ENCODE measurements at regions of chr17 and their contacts with region 1.

Region 1: DNA sequence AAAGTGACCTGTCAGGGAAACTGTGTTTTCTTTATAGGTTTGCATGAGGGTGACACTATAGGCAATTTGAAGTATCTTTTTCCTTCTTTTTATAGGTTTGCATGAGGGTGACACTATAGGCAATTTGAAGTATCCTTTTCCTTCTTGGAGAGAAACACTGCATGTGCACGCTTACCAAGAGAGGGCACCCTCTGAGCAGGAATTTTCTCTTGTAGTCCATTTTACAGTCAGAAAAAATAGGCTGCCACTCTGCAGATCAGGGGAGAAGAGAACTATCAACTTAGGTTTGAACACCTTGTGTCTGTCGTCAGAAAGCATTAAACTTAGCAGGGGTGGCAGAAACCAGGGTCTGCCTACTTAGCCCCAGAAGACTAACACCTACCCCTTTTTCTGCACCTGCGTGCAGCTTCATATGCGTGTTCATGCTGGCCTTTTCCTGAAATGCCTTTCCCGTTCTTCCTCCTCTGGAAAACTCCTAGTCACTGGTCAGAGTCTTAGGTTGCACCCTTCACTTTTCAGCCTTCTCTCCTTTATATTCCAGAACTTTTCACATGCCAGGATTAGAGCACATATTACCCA is 16.4 kb upstream of the SMIM36 start:
- DNase-seq: peak in 3 of 10 donors; percentile 6 to 30 (median 24)
- H3K4me3 ChIP-seq: no peak overlapping the region
- H3K27ac ChIP-seq: no peak overlapping the region
- H3K27me3 ChIP-seq: peaks cover 0 to 4% (median 0%) of the 10 kb centered on the region in 45 donors
- CTCF ChIP-seq: peak in 54 of 56 donors; percentile 18 to 79 (median 57)

Region 2: GRCh38 chr17:55549140-55549539 is 21.5 kb after region 1 on chr17:
- intact Hi-C with region 1: no loop called
- DNase-seq: no peak
- H3K4me3 ChIP-seq: no peak overlapping the region
- H3K27ac ChIP-seq: no peak overlapping the region
- H3K27me3 ChIP-seq: peaks cover 0 to 20% (median 0%) of the 10 kb centered on the region in 45 donors
- CTCF ChIP-seq: peak in 7 of 56 donors; percentile 11 to 32 (median 19)

Region 3: GRCh38 chr17:55770148-55770870 is 242.7 kb after region 1 on chr17:
- intact Hi-C with region 1: loop called (anchors 1 to 2 kb)
- DNase-seq: no peak
- H3K4me3 ChIP-seq: no peak overlapping the region
- H3K27ac ChIP-seq: peak overlapping the region in 4 of 59 donors; percentile 1 to 29 (median 10)
- H3K27me3 ChIP-seq: no peaks in the 10 kb centered on the region
- CTCF ChIP-seq: peak; percentile 55 to 89 (median 74)

Region 4: GRCh38 chr17:55825213-55825612 is 297.6 kb after region 1 on chr17:
- intact Hi-C with region 1: loop called in 1 of 2 experiments (anchors 10 kb)
- DNase-seq: no peak
- H3K4me3 ChIP-seq: no peak overlapping the region
- H3K27ac ChIP-seq: no peak overlapping the region
- H3K27me3 ChIP-seq: peaks cover 0 to 5% (median 0%) of the 10 kb centered on the region in 45 donors
- CTCF ChIP-seq: peak in 20 of 56 donors; percentile 13 to 55 (median 28)

Measured in dorsolateral prefrontal cortex (tissue), 120 donors.